ENCODE measurements at regions of chr18 and their contacts with region 1.

Region 1: GRCh38 chr18:24426398-24427294 is at the start of gene IMPACT:
- DNase-seq: peak; percentile 80
- ATAC-seq: peak; percentile 91
- H3K4me3 Mint-ChIP-seq: peak within 1 kb of the TSS; percentile 93
- H3K27ac Mint-ChIP-seq: peak within 1 kb of the TSS; percentile 87
- H3K4me1 Mint-ChIP-seq: peaks cover 20% of the 10 kb centered on the region
- H3K27me3 Mint-ChIP-seq: peaks cover 23% of the 10 kb centered on the region
- CTCF ChIP-seq: no peak
- total RNA-seq, gene IMPACT: 11.6 and 17.4 TPM in 2 replicates

Region 2: DNA sequence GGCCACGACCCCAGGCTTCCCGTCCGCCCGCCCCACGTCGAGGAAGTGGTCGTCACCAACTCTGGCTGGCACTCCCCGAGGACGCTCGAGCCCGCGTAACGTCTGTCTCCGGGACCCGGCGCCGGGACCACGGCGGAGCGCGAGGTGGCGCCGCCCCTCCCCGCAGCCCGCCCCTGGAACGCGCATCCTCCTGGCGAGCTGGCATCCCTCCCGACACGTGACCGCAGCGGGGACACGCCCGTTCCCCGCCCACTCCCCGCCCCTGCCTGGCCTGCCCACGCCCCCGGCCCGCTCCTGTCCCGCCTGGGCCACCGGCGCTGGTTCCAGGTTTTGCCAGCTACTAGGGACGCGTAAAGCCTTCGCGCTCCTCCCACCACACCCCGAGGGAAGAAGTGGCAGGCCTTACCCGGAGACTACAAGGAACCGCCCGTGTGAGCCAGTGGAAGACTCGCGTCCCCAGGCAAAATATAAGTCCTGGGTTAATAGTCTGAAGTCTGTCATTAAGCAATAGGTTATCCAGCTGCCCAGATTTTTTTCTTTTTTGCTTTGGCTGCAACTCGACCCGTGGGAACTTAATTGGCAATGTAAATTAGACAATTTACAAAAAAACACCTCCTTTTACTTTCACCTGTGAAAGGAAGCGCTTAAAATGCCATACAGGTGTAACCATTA is 28.8 kb before region 1 on chr18 and contains the start of gene OSBPL1A:
- CTCF ChIA-PET with region 1: no interaction called
- POLR2A ChIA-PET with region 1: interaction called, 7 read pairs
- intact Hi-C with region 1: loop called (anchors 2 kb)
- DNase-seq: no peak
- ATAC-seq: peak; percentile 89
- H3K4me3 Mint-ChIP-seq: peak within 1 kb of the TSS; percentile 86
- H3K27ac Mint-ChIP-seq: no peak within 1 kb of the TSS
- H3K4me1 Mint-ChIP-seq: peaks cover 16% of the 10 kb centered on the region
- H3K27me3 Mint-ChIP-seq: peaks cover 33% of the 10 kb centered on the region
- CTCF ChIP-seq: no peak
- total RNA-seq, gene OSBPL1A: 0.80 and 0.81 TPM in 2 replicates

Region 3: DNA sequence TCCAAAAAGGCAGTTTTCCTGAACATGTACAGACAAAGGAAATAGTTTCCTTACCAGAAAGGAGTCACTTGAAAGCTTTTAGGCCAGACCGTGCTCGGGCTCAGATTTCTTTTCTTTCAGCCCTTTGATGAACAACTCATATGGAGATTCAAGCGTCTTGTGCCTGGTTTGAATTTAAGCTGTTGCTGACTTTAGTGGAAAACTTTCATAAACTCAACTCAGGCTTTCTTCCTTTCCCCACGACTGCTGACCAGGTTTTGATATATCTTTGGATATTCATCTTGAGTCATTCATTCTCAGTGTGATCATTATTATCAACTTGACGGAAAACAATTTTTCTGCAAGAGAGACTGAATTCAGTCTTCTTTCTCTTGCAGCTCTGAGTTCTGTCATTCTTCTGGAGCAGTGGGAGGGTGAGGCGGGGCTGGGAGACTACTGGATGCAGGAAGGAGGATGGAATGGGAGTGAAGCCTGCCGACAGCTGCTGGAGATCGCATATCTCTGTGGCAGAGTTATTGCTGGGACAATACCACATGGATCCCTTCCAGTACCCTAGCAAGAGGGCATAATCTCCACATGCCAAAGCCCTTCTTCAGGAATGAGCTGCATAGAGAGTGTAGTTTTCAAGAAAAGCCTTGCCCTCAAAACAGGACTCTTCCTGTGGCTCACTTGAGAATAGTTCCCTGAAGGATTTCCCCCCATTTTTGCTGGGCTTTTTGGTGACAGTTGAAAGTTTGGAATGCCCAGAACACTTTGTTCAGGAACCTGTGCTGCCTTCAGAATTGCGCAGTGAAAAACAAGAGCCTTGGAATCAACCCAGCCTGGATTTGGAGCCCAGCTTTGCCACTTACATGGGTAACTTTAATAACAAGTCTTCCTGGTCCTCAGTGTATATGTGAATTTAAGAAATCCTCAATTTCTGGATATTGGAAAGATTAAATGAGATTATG is 560.9 kb after region 1 on chr18:
- CTCF ChIA-PET with region 1: no interaction called
- POLR2A ChIA-PET with region 1: no interaction called
- intact Hi-C with region 1: no loop called
- DNase-seq: no peak
- ATAC-seq: no peak
- H3K4me3 Mint-ChIP-seq: no peak overlapping the region
- H3K27ac Mint-ChIP-seq: no peak overlapping the region
- H3K4me1 Mint-ChIP-seq: peaks cover 13% of the 10 kb centered on the region
- H3K27me3 Mint-ChIP-seq: no peaks in the 10 kb centered on the region
- CTCF ChIP-seq: no peak

Measured in activated B cell treated with CpG ODN at 0.5 μM for 24 hours (primary cell).